ENCODE measurements at regions of chr14 and their contacts with region 1.

Region 1: DNA sequence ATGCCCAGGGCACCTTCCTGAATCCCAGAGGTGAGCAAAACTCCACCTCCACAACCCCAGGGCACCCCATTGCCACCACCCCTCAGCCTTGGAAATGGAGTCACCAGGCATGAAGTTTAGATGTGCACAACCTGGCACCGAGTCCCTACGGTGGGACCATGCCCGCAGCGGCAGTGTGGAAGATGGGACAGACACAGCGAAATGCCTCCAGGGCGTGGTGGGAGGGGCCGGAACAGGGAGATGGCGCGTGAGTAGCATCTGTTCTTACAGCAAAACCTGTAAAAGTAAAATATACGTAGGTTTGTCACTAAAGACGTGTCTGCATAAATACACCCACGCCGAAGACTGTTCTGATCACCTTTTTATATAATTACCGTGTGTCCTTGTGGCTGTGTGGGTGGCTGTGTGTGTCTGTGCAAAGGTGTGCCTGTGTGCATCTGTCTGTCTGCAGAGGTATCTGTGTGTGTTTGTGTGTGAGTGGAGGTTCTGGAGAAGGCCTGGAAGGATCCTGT is 17.4 kb upstream of the DEGS2 start:
- DNase-seq: no peak
- H3K4me3 ChIP-seq: no peak overlapping the region
- H3K27ac ChIP-seq: no peak overlapping the region
- H3K4me1 ChIP-seq: no peaks in the 10 kb centered on the region
- H3K27me3 ChIP-seq: no peaks in the 10 kb centered on the region
- CTCF ChIP-seq: no peak
- EP300 ChIP-seq: no peak
- POLR2A ChIP-seq: no peak

Region 2: GRCh38 chr14:99393047-99393655 is 783.7 kb before region 1 on chr14:
- intact Hi-C with region 1: no loop called
- DNase-seq: no peak
- H3K4me3 ChIP-seq: no peak overlapping the region
- H3K27ac ChIP-seq: no peak overlapping the region
- H3K4me1 ChIP-seq: no peaks in the 10 kb centered on the region
- H3K27me3 ChIP-seq: no peaks in the 10 kb centered on the region
- CTCF ChIP-seq: peak in 2 of 3 donors; percentile 9 to 10
- EP300 ChIP-seq: no peak
- POLR2A ChIP-seq: no peak

Region 3: DNA sequence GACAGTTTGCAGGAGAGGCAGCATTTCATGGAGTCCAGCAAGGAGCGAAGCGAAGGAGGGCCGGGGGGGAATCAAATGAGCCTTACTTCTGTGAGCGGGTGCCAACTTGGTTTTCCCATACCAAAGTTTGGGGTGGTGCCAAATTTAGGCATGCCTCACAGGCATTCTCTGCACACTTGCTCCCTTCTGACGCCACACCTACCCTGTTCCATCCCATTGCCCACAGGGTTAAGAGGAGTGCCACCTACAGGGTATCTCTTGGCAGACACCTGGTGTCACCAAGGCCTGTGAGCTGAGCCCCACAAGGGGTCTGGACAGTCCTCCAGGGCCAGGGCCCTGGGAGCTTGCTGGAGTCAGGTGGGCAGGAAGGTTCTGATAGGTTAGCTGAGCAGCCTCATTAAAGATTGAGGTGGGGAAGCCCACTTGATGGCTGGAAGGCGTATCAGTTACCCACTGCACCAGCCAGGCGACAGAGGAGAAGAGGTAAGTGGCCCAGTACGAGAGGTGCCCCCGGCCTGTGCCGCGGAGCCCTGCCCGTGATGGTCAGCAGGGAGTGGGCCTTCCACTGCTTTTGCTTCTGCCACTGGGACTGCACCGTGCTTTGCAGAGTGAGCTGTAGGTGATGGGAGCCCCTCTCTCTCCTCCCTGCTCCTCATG is 62.6 kb before region 1 on chr14:
- intact Hi-C with region 1: loop called in 1 of 4 experiments (anchors 5 kb)
- DNase-seq: no peak
- H3K4me3 ChIP-seq: no peak overlapping the region
- H3K27ac ChIP-seq: no peak overlapping the region
- H3K4me1 ChIP-seq: peaks cover 9% of the 10 kb centered on the region
- H3K27me3 ChIP-seq: no peaks in the 10 kb centered on the region
- CTCF ChIP-seq: no peak
- EP300 ChIP-seq: no peak
- POLR2A ChIP-seq: no peak

Region 4: GRCh38 chr14:100755649-100756048 is 578.8 kb after region 1 on chr14:
- intact Hi-C with region 1: no loop called
- DNase-seq: no peak
- H3K4me3 ChIP-seq: no peak overlapping the region
- H3K27ac ChIP-seq: no peak overlapping the region
- H3K4me1 ChIP-seq: no peaks in the 10 kb centered on the region
- H3K27me3 ChIP-seq: no peaks in the 10 kb centered on the region
- CTCF ChIP-seq: no peak
- EP300 ChIP-seq: no peak
- POLR2A ChIP-seq: no peak

Measured in ovary (tissue), 10 donors.